ENCODE measurements at regions of chr9 and their contacts with region 1.

Region 1: DNA sequence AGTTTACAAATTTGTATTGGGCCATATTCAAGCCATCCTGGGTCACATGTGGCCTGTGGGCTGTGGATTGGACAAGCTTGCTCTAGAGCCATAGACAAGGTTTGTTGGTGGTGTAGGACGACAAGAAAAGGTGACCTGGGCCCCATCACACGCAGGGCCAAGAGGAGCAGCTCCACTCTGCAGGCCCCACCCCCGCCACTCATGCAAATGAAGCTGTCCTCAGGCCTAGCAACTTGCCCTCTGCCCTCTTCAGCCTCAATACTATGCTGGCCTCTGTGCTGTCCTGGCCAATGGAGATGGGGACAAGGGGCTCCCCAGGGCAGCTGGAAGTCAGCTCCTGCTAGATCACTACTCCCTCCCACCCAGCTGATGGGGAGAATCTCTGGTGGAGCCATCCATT is 55.2 kb upstream of the TMEM252 start:
- DNase-seq: no peak
- ATAC-seq: no peak

Region 2: GRCh38 chr9:68653141-68653595 is 57.3 kb after region 1 on chr9:
- intact Hi-C with region 1: loop called in 1 of 2 experiments (anchors 10 kb)
- DNase-seq: no peak
- ATAC-seq: no peak